ENCODE measurements at regions of chr6 and their contacts with region 1.

Region 1: GRCh38 chr6:83067448-83068413 is at the start of gene DOP1A:
- ATAC-seq: peak; percentile 85 to 90 (median 88)
- H3K4me3 ChIP-seq: peak within 1 kb of the TSS; percentile 58 to 90 (median 79)
- H3K27ac ChIP-seq: peak within 1 kb of the TSS; percentile 91 to 92
- H3K4me1 ChIP-seq: peaks cover 10 to 15% of the 10 kb centered on the region in 2 donors
- total RNA-seq, gene DOP1A: 15.2 to 36.8 (median 25.0) TPM

Region 2: DNA sequence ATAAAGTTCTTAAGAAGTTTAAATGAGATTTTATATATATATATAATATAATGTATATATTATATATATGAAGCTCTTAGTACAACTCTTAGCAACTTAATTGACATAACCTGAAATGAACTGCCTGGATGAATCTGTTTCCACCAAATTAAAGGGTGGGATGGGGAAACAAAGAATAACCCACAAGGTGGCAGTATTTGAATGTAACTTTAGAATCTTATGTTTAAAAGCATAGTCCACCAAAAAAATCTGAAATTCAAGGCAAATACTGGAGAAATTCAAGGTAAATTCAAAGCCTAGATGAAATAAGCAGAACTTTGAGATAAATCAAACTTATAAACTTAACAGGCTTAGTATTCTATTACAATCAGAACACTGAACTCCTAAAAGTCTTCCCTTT is 815.8 kb before region 1 on chr6:
- in situ Hi-C with region 1: loop called in 4 of 9 experiments (anchors 10 to 25 kb)
- ATAC-seq: no peak
- H3K4me3 ChIP-seq: no peak overlapping the region
- H3K27ac ChIP-seq: no peak overlapping the region
- H3K4me1 ChIP-seq: peaks cover 7 to 8% of the 10 kb centered on the region in 2 donors

Region 3: DNA sequence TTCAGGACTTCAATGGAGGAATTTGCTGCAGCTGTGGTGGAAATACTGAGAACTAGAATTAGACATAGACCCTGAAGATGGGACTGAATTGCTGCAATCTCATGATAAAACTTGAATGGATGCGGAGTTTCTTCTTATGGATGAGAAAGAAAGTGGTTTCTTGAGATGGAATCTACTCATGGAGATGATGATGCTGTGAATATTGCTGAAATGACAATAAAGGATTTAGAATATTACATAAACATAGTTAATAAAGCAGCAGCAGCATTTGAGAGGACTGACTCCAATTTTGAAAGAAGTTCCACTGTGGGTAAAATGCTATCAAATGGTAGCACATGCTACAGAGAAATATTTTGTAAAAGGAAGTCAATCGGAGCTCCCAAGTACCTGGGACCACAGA is 266.6 kb before region 1 on chr6:
- in situ Hi-C with region 1: no loop called
- ATAC-seq: no peak
- H3K4me3 ChIP-seq: no peak overlapping the region
- H3K27ac ChIP-seq: no peak overlapping the region
- H3K4me1 ChIP-seq: no peaks in the 10 kb centered on the region

Region 4: DNA sequence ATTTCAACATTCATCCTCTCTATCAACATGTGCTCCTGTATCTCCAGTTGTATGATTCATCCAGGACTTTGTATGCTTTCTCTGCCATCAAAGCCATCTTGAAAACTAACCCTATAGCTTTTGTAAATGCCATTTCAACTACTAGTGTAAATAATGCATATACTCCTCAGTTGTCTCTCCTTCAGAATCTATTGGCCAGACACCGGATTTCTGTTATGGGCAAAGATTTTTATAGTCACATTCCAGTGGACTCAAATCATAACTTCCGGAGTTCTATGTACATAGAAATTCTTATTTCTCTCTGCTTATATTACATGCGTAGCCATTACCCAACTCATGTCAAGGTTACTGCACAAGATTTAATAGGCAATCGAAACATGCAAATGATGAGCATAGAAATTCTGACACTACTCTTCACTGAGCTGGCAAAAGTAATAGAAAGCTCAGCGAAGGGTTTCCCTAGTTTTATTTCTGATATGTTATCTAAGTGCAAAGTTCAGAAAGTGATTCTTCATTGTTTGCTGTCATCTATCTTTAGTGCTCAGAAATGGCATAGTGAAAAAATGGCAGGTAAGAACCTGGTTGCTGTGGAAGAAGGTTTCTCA is 70.5 kb after region 1 on chr6:
- in situ Hi-C with region 1: no loop called
- ATAC-seq: no peak
- H3K4me3 ChIP-seq: no peak overlapping the region
- H3K27ac ChIP-seq: no peak overlapping the region
- H3K4me1 ChIP-seq: no peaks in the 10 kb centered on the region

Region 5: GRCh38 chr6:83215131-83216047 is 147.7 kb after region 1 on chr6:
- in situ Hi-C with region 1: loop called in 1 of 9 experiments (anchors 10 kb)
- ATAC-seq: peak; percentile 88 to 98 (median 96)
- H3K4me3 ChIP-seq: no peak overlapping the region
- H3K27ac ChIP-seq: no peak overlapping the region
- H3K4me1 ChIP-seq: peaks cover 0 to 5% of the 10 kb centered on the region in 2 donors

Measured in motor neuron (in vitro differentiated cells).